A673 (cell line): ENCODE measurements at regions of chr10 and their contacts with region 1.

Region 1: GRCh38 chr10:72215652-72216549 is at the starts of genes ANAPC16 and ASCC1:
- DNase-seq: peak; percentile 95
- H3K4me3 ChIP-seq: peak within 1 kb of the TSS; percentile 65
- H3K27ac ChIP-seq: peak within 1 kb of the TSS; percentile 95
- H3K4me1 ChIP-seq: peaks cover 14% of the 10 kb centered on the region
- H3K27me3 ChIP-seq: no peaks in the 10 kb centered on the region
- CTCF ChIP-seq: no peak
- total RNA-seq, gene ANAPC16: 57.6 and 62.5 TPM in 2 replicates
- total RNA-seq, gene ASCC1: 40.2 and 43.1 TPM in 2 replicates

Region 2: DNA sequence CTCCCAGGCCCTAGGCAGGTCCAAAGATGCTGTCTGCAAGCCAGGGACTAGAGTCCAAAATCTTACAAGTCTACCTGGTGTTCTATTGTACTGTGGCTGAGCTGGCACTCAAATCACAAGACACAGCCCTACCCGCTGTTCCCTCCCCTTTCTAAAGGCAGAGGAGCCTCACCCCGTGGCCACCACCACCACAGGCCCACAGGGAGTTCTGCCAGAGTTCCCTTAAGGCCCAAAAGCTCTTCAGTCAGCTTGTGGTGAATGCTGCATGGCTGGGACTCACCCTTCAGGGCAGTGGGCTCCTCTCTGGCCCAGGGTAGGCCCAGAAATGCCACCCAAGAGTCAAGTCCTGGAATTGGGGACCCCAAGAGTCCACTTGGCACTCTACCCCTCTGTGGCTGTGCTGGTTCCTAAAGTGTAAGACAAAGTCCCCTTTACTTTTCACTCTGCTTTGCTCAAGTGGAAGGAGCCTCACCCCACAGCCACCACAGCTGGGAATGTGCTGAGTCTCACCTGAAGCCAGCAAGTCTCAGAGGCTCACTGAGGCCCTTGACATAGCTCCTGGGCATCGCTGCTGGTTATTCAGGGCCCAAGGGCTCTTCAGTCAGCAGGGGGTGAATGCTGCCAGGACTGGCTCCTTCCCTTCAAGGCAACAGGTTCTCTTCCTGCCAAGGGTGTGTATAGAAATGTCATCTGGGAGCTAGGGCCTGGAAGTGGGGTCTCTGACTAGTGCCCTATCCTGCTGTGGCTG is 316.1 kb before region 1 on chr10:
- CTCF ChIA-PET with region 1: no interaction called
- POLR2A ChIA-PET with region 1: no interaction called
- intact Hi-C with region 1: loop called (anchors 5 kb)
- DNase-seq: no peak
- H3K4me3 ChIP-seq: no peak overlapping the region
- H3K27ac ChIP-seq: no peak overlapping the region
- H3K4me1 ChIP-seq: no peaks in the 10 kb centered on the region
- H3K27me3 ChIP-seq: no peaks in the 10 kb centered on the region
- CTCF ChIP-seq: no peak

Region 3: DNA sequence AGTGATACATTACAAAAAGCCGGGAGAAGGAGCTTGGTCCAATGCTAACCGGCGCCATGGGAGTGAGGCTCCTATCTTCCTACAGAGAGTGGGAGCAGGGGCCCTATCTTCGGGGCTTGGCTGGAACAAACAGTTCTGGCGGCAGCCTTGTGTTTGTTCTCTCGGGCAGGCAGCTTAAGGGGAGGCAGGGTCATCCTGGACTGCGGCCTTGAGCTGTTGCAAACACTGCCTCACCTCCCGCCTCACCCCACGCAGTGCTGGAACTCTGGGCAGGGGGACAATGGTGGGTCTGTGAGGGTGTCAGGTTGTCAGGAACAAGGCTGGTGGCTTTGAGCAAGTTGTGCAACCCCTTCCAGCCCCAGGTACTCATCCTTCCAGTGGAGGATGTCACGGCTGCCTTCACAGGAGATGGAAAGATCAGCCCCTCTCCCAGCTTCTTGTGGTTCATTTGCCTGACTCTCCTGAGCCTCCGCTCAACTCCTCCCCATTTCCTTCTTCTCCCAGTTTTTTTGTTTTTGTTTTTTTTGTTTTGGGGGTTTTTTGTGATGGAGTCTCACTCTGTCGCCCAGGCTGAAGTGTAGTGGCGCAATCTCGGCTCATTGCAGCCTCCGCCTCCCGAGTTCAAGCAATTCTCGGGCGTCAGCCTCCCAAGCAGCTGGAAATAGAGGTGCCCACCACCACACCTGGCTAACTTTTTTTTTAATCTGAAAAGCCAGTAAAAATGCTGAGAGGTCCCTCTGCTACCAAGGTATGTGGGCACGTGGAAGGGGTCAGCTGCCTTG is 184.9 kb before region 1 on chr10:
- CTCF ChIA-PET with region 1: no interaction called
- POLR2A ChIA-PET with region 1: no interaction called
- intact Hi-C with region 1: no loop called
- DNase-seq: no peak
- H3K4me3 ChIP-seq: no peak overlapping the region
- H3K27ac ChIP-seq: no peak overlapping the region
- H3K4me1 ChIP-seq: no peaks in the 10 kb centered on the region
- H3K27me3 ChIP-seq: no peaks in the 10 kb centered on the region
- CTCF ChIP-seq: no peak